WTC11 (cell line): ENCODE measurements at regions of chr5 and their contacts with region 1.

Region 1: GRCh38 chr5:2818936-2819335 is 67.5 kb upstream of the IRX2 start:
- DNase-seq: no peak
- ATAC-seq: no peak
- H3K4me3 Mint-ChIP-seq: no peak overlapping the region
- H3K27ac Mint-ChIP-seq: no peak overlapping the region
- H3K4me1 Mint-ChIP-seq: 0 out of 2 replicates have a peak, but pooled peaks cover 1% of the 10 kb centered on the region
- H3K27me3 Mint-ChIP-seq: peaks cover 3% of the 10 kb centered on the region; the same call in 1 of the 2 replicates
- CTCF ChIP-seq: no peak

Region 2: DNA sequence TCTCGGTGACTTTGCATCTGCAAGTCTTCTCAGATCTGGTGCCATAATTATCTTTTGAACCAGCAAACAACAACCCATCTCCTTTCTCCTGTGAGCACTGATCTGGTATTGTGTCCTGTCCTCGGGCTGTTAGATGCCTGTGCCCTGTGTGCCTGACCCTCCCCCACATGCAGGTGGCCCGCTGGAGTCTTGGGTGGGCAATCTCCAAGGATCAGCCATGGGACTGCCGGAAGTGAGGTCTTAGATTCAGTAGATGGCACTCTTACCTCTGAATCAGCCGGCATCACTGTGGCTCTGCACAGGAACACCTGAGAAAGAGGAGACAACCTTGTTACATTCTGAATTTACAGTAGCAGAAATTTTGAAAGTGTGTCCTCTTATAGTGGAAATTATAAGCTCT is 239.8 kb before region 1 on chr5:
- CTCF ChIA-PET with region 1: no interaction called
- POLR2A ChIA-PET with region 1: no interaction called
- DNase-seq: peak; percentile 31
- ATAC-seq: peak; percentile 76
- H3K4me3 Mint-ChIP-seq: no peak overlapping the region
- H3K27ac Mint-ChIP-seq: no peak overlapping the region
- H3K4me1 Mint-ChIP-seq: peaks cover 12% of the 10 kb centered on the region
- H3K27me3 Mint-ChIP-seq: no peaks in the 10 kb centered on the region; the same call in 1 of the 2 replicates
- CTCF ChIP-seq: no peak

Region 3: DNA sequence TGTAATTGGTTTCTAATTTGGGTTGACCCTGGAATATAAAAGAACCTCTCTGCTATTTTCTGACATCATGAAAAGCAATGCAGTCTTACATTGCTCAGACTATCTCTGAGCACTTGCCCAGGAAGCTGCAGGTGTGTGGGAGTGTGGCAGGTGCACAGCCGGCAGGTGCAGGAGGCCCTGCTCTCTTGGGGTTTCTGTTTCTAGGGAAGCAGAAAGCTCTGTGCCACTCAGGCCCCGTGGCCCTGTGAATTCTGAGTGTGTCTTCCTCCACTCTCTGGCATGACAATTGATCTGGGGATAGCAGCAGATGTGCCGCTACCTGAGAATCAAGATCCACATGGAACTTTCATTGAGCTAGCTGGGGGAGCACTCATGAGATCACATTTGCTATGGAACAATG is 21.8 kb before region 1 on chr5:
- CTCF ChIA-PET with region 1: no interaction called
- POLR2A ChIA-PET with region 1: no interaction called
- DNase-seq: no peak
- ATAC-seq: no peak
- H3K4me3 Mint-ChIP-seq: no peak overlapping the region
- H3K27ac Mint-ChIP-seq: no peak overlapping the region
- H3K4me1 Mint-ChIP-seq: 0 out of 2 replicates have a peak, but pooled peaks cover 3% of the 10 kb centered on the region
- H3K27me3 Mint-ChIP-seq: 0 out of 2 replicates have a peak, but pooled peaks cover 2% of the 10 kb centered on the region
- CTCF ChIP-seq: no peak

Region 4: DNA sequence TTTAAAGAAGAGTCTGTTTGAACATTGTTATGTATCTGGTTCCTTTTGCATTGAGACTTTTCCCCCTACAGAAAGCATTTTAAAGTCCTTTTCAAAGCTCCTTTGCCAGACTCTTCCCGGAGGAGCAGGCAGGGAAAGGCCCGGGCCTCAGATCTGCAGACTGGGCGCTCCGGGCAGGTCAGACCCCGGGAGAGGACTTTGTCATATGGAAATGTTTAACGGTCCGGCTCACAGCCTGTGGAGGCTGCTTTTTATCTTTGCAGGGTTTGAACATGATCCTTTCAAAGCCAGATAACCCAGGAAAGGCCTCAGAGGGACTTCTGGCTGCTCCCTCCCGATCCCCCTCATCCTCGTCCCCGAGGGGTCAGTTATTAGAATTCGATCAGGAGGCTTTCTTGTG is 14.6 kb after region 1 on chr5:
- CTCF ChIA-PET with region 1: no interaction called
- POLR2A ChIA-PET with region 1: no interaction called
- DNase-seq: no peak
- ATAC-seq: no peak
- H3K4me3 Mint-ChIP-seq: no peak overlapping the region
- H3K27ac Mint-ChIP-seq: no peak overlapping the region
- H3K4me1 Mint-ChIP-seq: peaks cover 6% of the 10 kb centered on the region
- H3K27me3 Mint-ChIP-seq: no peaks in the 10 kb centered on the region; the same call in none of the 2 replicates
- CTCF ChIP-seq: no peak

Region 5: DNA sequence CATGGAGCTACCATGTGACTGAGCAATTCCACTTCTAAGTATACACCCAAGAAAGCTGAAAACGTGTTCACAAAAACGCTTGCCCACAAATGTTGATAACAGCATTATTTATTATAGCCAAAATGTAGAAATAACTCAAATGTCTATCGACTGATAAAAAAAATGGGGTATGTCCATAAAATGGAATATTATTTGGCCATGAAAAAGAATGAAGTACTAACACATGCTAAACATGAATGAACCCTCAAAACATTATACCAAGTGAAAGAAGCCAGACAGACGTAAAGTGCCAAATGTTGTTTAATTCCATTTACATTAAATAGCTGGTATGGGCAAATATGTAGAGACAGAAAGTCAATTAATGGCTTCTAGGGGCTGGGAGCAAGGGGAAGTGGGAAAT is 117.5 kb after region 1 on chr5:
- CTCF ChIA-PET with region 1: no interaction called
- POLR2A ChIA-PET with region 1: no interaction called
- DNase-seq: no peak
- ATAC-seq: no peak
- H3K4me3 Mint-ChIP-seq: no peak overlapping the region
- H3K27ac Mint-ChIP-seq: no peak overlapping the region
- H3K4me1 Mint-ChIP-seq: no peaks in the 10 kb centered on the region
- H3K27me3 Mint-ChIP-seq: no peaks in the 10 kb centered on the region
- CTCF ChIP-seq: no peak

Region 6: GRCh38 chr5:3114467-3114866 is 295.5 kb after region 1 on chr5:
- CTCF ChIA-PET with region 1: no interaction called
- POLR2A ChIA-PET with region 1: interaction called, 10 read pairs
- DNase-seq: no peak
- ATAC-seq: no peak
- H3K4me3 Mint-ChIP-seq: no peak overlapping the region
- H3K27ac Mint-ChIP-seq: no peak overlapping the region
- H3K4me1 Mint-ChIP-seq: peaks cover 64% of the 10 kb centered on the region
- H3K27me3 Mint-ChIP-seq: peaks cover 81% of the 10 kb centered on the region
- CTCF ChIP-seq: no peak